ENCODE measurements at regions of chr16 and their contacts with region 1.

Region 1: DNA sequence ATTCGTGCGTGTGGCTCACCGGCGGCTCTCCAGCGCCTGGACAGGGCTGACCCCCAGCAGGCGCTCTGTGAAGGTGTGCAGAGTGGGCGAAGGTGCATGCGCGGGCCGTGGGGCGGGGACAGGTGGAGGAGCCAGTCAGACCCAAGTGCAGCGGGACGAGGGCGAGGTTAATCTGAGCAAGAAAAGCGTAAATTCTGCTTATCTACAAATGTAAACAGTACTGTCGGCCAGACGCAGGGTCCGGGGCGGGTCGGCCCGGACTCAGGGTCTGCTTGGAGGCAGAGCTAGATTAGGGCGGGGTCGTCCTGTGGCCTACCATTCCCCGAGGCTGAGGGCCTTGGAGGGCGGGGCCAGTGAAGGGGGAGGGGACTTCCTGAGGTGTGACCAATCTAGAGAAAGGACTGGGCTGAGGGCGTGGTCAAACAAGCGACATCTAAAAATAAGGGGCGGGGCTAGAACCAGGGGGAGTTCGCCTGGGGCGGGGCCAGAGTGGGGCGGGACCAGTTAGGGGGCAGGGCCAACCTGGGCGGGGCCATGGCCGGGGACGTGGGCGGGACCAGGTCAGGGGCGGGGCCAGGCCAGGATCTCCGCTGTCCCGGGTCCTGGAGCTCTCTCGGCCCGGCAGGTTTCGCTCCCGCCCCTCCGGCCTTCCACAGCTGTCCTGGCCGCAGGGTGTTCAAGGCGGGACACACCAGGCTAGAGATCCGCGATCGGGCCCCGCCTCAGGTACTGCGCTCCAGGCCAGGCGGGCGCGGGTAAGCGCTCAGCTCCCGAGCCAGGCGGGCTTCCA is at the start of gene SEC14L5:
- DNase-seq: peak; percentile 95 to 99 (median 98)
- H3K4me3 ChIP-seq: peak within 1 kb of the TSS; percentile 47 to 99 (median 81)
- H3K27ac ChIP-seq: peak within 1 kb of the TSS in 58 of 59 donors; percentile 25 to 100 (median 96)
- H3K27me3 ChIP-seq: no peaks in the 10 kb centered on the region
- CTCF ChIP-seq: peak in 4 of 56 donors; percentile 11 to 28 (median 20)
- total RNA-seq, gene SEC14L5: 34.5 to 145 (median 61.7) TPM

Region 2: DNA sequence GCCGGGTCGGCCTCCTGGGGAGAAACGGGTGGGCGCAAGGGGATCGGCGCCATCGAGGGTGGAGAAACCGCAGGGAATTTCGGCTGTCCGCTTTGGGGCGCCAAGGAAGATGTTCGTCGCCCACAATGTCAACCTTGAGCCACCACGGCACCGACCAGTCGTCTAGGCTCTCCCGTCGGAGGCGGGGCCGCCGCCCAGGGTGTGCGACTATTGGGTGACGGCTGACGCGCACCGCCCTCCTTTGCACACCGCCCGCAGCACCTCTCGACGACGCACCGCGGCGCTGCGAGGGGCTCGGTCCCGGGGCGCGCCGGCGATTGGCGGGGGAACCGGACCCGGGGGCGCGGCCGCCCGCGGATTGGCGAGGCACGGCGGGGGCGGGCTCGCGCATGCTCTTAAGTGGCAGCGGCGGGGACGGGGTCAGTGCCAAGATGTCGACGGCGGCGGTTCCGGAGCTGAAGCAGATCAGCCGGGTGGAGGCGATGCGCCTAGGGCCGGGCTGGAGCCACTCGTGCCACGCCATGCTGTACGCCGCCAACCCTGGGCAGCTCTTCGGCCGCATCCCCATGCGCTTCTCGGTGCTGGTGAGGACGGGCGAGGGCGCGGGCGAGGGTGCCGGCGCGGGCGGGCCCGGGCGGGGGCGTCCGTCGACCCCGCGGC is 264.5 kb before region 1 on chr16 and contains the start of gene NUDT16L1:
- intact Hi-C with region 1: loop called (anchors 5 kb)
- DNase-seq: peak; percentile 93 to 99 (median 97)
- H3K4me3 ChIP-seq: peak within 1 kb of the TSS; percentile 65 to 100 (median 93)
- H3K27ac ChIP-seq: peak within 1 kb of the TSS; percentile 48 to 97 (median 89)
- H3K27me3 ChIP-seq: no peaks in the 10 kb centered on the region
- CTCF ChIP-seq: peak in 54 of 56 donors; percentile 13 to 82 (median 57)
- total RNA-seq, gene NUDT16L1: 29.9 to 65.8 (median 39.8) TPM

Region 3: GRCh38 chr16:4802659-4803287 is 155.1 kb before region 1 on chr16:
- intact Hi-C with region 1: loop called in 1 of 2 experiments (anchors 5 kb)
- DNase-seq: peak; percentile 87 to 96 (median 94)
- H3K4me3 ChIP-seq: peak overlapping the region; percentile 64 to 97 (median 85)
- H3K27ac ChIP-seq: peak overlapping the region; percentile 56 to 99 (median 94)
- H3K27me3 ChIP-seq: no peaks in the 10 kb centered on the region
- CTCF ChIP-seq: peak in 53 of 56 donors; percentile 16 to 74 (median 52)

Region 4: DNA sequence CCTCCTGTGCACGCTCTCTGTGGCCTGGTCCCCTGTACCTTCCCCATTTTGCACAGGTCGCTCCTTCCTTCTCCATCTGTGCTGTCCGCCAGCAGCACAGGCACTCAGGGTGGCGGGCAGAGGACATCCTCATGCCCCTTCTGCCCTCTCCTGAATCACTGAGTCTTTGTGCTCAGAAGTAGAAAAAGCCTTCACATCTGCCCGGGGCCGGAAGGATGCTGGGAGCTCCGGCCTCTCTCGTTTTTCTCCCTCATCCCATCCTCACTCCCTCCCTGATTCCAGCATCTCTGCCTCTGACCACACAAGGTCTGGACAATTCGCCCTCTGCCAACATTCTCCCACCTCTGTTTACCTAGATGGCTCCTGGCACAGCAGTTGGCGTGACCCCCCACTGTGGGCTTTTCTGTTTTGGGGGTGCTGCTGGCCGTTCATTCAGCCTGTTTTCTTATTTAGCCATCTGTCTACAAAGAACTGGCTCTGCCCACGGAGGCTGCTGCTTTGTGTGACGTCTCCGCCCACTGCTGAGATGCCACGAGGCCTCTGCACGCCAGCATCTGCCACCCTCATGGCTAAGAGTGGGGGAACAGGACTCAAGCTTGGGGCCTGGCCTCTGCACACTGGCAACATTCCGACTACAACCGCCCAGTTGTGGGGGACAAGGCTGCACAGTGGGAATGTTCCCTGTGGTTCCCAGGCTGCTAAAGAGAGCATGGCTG is 37.0 kb after region 1 on chr16:
- intact Hi-C with region 1: loop called (anchors 2 to 5 kb)
- DNase-seq: peak; percentile 23 to 89 (median 84)
- H3K4me3 ChIP-seq: peak overlapping the region in 4 of 59 donors; percentile 4 to 17 (median 10)
- H3K27ac ChIP-seq: peak overlapping the region; percentile 13 to 96 (median 91)
- H3K27me3 ChIP-seq: peaks cover 0 to 3% (median 0%) of the 10 kb centered on the region in 45 donors
- CTCF ChIP-seq: peak in 5 of 56 donors; percentile 1 to 14 (median 9)

Region 5: DNA sequence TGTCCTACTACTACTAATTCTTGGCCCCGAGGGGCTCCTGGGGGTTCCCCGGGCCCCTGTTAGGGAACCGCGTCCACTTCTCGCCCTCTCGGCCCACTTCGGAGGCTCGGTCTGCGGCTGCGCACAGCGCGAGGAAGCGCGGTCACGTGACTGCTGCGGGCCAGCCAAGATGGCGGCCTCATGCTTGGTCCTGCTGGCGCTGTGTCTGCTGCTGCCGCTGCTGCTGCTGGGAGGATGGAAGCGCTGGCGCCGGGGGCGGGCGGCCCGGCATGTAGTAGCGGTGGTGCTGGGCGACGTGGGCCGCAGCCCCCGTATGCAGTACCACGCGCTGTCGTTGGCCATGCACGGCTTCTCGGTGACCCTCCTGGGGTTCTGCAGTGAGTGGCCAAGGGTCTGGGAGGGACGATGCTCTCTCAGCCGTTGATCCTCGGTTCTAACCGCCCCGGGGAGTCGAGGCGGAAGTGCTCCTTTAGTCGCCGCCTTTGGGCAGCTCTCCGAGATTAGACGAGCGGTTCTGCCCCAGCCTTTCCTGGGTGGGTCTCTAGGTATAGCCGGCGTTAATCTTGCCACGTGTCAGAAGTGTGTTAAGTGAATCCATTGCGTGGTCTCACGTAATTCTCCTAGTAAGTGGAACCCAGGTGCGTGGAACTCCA is 113.9 kb after region 1 on chr16 and contains the start of gene ALG1:
- intact Hi-C with region 1: loop called in 1 of 2 experiments (anchors 10 kb)
- DNase-seq: peak; percentile 83 to 94 (median 86)
- H3K4me3 ChIP-seq: peak within 1 kb of the TSS; percentile 54 to 95 (median 75)
- H3K27ac ChIP-seq: peak within 1 kb of the TSS; percentile 50 to 95 (median 89)
- H3K27me3 ChIP-seq: no peaks in the 10 kb centered on the region
- CTCF ChIP-seq: peak in 32 of 56 donors; percentile 4 to 53 (median 28)
- total RNA-seq, gene ALG1: 14.4 to 28.9 (median 21.0) TPM